Right ventricle myocardium superior (tissue), 1 donor: ENCODE measurements at regions of chr7 and their contacts with region 1.

Region 1: GRCh38 chr7:28853834-28854749 is 104.0 kb downstream of the TRIL start:
- DNase-seq: peak; percentile 90
- ATAC-seq: peak; percentile 99

Region 2: GRCh38 chr7:28389504-28390395 is 464.3 kb before region 1 on chr7:
- intact Hi-C with region 1: loop called (anchors 2 kb)
- DNase-seq: no peak
- ATAC-seq: peak; percentile 78

Region 3: GRCh38 chr7:28408960-28409715 is 445.0 kb before region 1 on chr7:
- intact Hi-C with region 1: loop called (anchors 5 kb)
- DNase-seq: peak; percentile 95
- ATAC-seq: peak; percentile 87

Region 4: DNA sequence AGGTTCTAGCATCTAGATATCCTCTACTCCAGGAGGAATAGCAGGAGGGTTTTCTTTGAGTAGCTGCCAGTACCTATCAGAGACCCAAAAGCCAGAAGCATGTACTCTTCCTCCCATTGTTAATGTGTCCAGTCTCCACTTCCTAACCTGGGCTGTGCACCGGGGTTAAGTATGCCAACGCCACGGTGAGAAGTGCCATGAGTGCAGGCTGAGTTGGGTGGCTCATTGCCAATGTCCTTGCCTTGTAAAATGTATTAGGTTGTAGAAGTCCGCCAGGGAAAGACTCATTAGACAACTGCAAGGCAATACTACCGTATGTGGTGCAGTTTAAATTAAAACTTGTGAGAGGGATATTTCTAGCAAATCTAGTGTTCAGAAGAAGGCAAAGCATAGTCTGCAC is 654.5 kb after region 1 on chr7:
- intact Hi-C with region 1: no loop called
- DNase-seq: peak; percentile 54
- ATAC-seq: peak; percentile 56